Colonic mucosa (tissue), 4 donors: ENCODE measurements at regions of chr9 and their contacts with region 1.

Region 1: GRCh38 chr9:95510709-95511615 is 5.8 kb downstream of the PTCH1 start:
- DNase-seq: peak; percentile 88
- H3K4me3 ChIP-seq: peak overlapping the region; percentile 66
- H3K27ac ChIP-seq: peak overlapping the region; percentile 85
- H3K4me1 ChIP-seq: peaks cover 4% of the 10 kb centered on the region
- H3K27me3 ChIP-seq: peaks cover 7% of the 10 kb centered on the region
- CTCF ChIP-seq: no peak

Region 2: DNA sequence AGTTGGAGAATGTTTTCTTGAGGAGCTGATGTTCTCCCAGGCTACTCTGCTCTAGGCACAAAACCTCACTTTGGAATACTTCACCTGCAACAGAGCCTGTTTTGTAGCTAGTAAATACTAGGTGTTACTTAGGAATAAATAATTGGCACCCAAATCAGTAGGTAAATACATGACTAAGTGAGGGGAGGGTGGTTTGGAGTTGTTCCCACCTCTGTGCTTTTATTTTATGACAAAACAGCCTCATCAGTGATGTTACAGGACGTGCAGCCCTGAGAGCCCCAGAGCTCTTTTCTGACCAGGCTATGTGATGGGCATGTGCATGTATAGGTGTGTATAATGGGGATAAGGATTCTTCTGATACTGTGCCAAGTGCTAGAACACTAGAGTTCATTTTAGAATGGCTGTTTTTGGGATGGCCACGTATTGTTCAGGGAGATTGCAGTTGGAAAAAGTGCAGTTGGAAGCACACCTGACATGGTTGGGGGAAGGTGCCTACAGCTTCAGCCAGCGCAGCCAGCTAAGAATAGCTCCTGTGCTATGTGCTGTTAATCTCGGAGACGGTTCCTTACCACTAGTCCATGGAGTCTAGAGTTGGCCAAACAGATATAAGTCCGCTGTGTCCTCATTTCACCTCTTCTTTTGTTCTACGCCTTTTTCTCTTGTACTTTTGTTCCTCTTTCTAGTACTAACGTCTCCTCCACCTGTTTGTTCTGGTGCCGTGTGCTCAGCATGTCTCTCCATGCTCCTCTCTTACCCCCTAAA is 478.2 kb before region 1 on chr9:
- intact Hi-C with region 1: no loop called
- DNase-seq: no peak
- H3K4me3 ChIP-seq: no peak overlapping the region
- H3K27ac ChIP-seq: no peak overlapping the region
- H3K4me1 ChIP-seq: no peaks in the 10 kb centered on the region
- H3K27me3 ChIP-seq: no peaks in the 10 kb centered on the region
- CTCF ChIP-seq: no peak

Region 3: GRCh38 chr9:95157481-95158151 is 353.3 kb before region 1 on chr9:
- intact Hi-C with region 1: no loop called
- DNase-seq: peak; percentile 47
- H3K4me3 ChIP-seq: no peak overlapping the region
- H3K27ac ChIP-seq: peak overlapping the region; percentile 4
- H3K4me1 ChIP-seq: no peaks in the 10 kb centered on the region
- H3K27me3 ChIP-seq: no peaks in the 10 kb centered on the region
- CTCF ChIP-seq: no peak

Region 4: DNA sequence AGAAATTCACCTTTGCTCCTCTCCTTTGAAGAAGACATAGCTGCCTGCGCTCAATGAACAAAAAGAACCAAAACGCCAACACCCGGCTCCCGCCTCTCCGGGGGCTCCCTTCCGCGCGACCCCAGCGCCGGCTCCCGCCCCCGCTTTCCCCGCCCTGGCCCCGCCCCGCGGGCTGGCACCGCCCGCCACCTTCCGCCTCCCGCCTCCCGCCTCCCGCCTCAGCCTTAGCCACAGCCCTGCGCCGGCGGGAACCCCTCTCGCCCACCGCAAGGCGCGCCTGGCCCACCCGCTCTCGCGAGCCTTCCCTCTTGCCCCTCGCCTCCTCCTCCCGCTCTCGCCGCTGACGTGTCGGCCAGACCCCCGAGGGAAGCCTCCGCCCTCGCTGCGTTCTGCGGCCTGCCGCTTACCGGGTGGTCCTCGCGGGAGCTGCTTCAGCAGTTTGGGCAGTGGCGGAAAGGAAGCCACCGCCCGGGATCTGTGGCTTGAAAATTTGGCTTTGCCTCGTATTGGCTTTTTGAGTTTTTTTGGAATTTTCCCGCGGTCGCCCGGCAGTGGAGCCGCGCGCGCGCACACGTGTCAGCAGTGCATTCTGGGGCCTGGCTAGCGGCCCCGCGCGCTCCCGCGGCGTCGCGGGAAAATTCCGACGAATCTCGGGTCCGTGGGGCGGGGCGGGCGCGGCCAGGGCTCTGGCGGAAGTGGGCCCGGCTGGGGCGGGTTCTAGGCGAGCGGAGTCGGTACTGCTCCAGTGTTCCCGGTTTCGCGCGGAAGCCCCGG is 193.7 kb before region 1 on chr9 and contains the start of gene FANCC:
- intact Hi-C with region 1: loop called (anchors 10 kb)
- DNase-seq: peak; percentile 95
- H3K4me3 ChIP-seq: peak within 1 kb of the TSS; percentile 97
- H3K27ac ChIP-seq: peak within 1 kb of the TSS; percentile 96
- H3K4me1 ChIP-seq: no peaks in the 10 kb centered on the region
- H3K27me3 ChIP-seq: no peaks in the 10 kb centered on the region
- CTCF ChIP-seq: no peak
- total RNA-seq, gene FANCC: 10.5 to 23.6 TPM

Region 5: DNA sequence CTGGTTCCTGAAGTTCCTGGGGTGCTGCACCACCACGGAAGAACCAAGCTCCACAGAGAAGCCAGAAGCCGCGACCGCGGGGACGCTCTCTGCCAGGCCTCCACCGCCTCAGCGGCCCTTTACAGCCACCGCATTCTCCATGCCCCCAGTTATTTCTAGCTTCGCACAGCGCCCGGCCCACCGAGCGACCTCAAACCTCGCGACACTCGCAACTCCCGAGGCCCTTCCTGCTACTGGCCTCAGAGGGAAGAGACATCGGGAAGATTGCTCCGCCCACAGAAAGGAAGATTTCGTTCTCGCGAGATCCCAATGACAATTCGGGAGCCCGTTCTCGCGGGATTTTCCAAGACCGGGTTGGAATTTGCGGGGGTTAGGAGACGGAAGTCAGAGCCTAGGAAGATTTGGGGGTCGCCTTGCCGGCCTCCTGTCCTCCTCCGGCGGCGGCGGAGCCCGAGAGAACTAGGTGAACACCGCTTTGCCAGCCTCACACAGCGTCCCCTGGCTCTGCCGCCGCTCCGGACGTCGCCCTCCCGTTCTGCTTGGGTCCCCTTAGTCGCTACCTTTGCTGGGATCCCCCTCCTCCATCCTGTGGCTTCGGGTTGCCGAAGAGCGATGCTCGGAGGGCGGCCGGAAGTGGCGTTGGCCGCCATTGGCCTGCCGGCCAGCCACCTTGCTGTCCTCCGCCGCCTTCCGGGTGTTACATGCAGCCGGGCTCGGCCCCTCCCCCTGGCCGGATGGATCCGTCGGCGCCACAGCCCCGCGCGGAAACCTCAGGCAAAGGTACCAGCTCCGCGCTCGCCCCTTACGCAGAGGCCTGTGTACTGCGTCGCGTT is 364.6 kb after region 1 on chr9 and contains the start of gene ERCC6L2:
- intact Hi-C with region 1: loop called (anchors 10 kb)
- DNase-seq: peak; percentile 95
- H3K4me3 ChIP-seq: no peak within 1 kb of the TSS
- H3K27ac ChIP-seq: no peak within 1 kb of the TSS
- H3K4me1 ChIP-seq: peaks cover 5% of the 10 kb centered on the region
- H3K27me3 ChIP-seq: no peaks in the 10 kb centered on the region
- CTCF ChIP-seq: no peak
- total RNA-seq, gene ERCC6L2: 21.5 to 36.4 TPM

Region 6: GRCh38 chr9:96217754-96218693 is 707.1 kb after region 1 on chr9:
- intact Hi-C with region 1: loop called (anchors 10 kb)
- DNase-seq: peak; percentile 79
- H3K4me3 ChIP-seq: peak overlapping the region; percentile 39
- H3K27ac ChIP-seq: peak overlapping the region; percentile 44
- H3K4me1 ChIP-seq: peaks cover 8% of the 10 kb centered on the region
- H3K27me3 ChIP-seq: no peaks in the 10 kb centered on the region
- CTCF ChIP-seq: peak; percentile 98